ENCODE measurements at regions of chr11 and their contacts with region 1.

Region 1: DNA sequence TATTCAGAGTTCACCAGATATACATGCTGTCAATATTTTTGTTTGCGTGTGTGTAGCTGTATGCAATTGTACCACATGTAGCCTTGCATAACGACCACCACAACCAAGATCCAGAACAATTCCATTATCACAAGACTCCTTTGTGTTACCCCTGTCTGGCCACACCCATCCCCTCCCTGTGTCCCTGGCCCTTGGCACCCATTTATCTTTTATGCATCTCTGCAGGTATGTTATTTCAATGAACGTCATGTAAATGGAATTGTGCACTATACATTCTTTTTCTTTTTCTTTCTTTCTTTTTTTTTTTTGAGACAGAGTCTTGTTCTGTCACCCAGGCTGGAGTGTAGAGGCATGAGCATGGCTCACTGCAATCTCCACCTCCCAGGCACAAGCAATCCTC is 9.7 kb upstream of the PAFAH1B2 start:
- DNase-seq: no peak
- ATAC-seq: no peak

Region 2: GRCh38 chr11:117205211-117205818 is 70.9 kb after region 1 on chr11:
- intact Hi-C with region 1: loop called in 1 of 2 experiments (anchors 5 kb)
- DNase-seq: no peak
- ATAC-seq: no peak

Measured in left colon (tissue), 2 donors.